ENCODE measurements at regions of chr5 and their contacts with region 1.

Region 1: DNA sequence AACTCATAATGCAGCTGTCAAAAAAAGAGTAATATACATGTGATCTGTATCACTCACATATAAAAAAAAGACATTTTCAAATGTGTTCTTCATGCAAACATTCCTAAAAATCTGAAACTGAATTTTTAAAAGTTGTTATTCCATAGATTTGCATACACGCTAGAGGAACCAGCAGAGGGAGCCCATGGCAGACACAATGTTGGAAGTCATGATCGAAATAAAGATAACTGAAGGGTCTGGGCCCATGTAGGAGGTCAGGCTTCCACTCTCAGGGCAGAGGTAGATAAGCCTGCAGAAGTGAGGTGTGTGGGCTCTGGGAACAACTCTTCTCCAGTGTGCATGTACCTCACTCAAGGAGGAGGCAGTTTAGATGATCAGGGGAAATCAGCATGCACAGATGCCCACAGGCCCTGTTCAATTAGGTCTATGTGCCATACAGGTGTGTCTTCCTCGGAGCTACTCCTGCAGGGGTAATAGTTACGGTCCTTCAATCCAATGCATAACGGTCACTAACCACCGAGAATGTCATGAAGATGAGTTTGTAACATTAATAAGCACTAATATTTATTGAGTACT is 208.6 kb downstream of the EPB41L4A start:
- DNase-seq: peak; percentile 63
- H3K4me3 Mint-ChIP-seq: no peak overlapping the region
- H3K27ac Mint-ChIP-seq: no peak overlapping the region
- H3K4me1 Mint-ChIP-seq: peaks cover 6% of the 10 kb centered on the region
- H3K27me3 Mint-ChIP-seq: no peaks in the 10 kb centered on the region
- CTCF ChIP-seq: peak; percentile 69

Region 2: DNA sequence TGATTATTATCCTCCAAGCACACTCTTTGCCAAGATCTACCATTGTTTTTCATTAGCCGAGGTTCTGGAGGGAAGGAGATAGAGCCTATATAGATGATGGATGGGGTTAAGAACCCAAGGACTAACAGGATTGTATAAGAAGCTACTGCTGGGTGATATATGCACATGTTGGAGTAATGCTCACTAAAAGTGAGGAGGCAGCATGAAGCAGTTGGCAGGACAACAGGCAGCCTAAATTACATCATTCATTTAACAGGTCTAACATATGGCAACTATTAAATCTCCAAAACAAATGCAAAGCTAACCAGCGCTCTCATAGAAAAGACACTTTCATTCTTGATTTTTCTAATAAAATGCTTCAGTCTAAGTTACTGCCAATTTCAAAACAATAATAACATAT is 84.6 kb before region 1 on chr5:
- CTCF ChIA-PET with region 1: no interaction called
- POLR2A ChIA-PET with region 1: no interaction called
- intact Hi-C with region 1: no loop called
- DNase-seq: no peak
- H3K4me3 Mint-ChIP-seq: no peak overlapping the region
- H3K27ac Mint-ChIP-seq: no peak overlapping the region
- H3K4me1 Mint-ChIP-seq: no peaks in the 10 kb centered on the region
- H3K27me3 Mint-ChIP-seq: no peaks in the 10 kb centered on the region
- CTCF ChIP-seq: no peak

Region 3: DNA sequence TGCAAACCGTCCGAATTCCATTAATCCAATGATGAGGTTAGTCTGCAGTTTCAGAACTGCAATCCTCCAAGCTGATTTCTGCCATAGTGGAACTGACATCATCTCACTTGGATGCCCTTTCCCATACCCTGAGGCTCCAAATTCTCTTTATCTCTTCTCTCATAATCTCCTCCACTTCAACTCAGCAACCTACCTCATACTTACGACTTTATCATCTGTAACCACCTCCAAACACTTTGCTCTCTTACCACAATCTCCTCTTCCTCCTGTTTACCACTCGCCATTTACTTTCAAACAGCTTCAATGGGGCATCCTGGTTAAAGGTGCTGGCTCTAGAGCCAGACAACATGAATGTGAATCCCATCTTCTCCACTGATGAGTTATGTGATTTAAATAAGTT is 14.6 kb before region 1 on chr5:
- CTCF ChIA-PET with region 1: interaction called, 12 read pairs
- POLR2A ChIA-PET with region 1: interaction called, 3 read pairs
- intact Hi-C with region 1: no loop called
- DNase-seq: no peak
- H3K4me3 Mint-ChIP-seq: no peak overlapping the region
- H3K27ac Mint-ChIP-seq: no peak overlapping the region
- H3K4me1 Mint-ChIP-seq: no peaks in the 10 kb centered on the region
- H3K27me3 Mint-ChIP-seq: no peaks in the 10 kb centered on the region
- CTCF ChIP-seq: no peak

Region 4: GRCh38 chr5:112529525-112529924 is 319.0 kb after region 1 on chr5:
- CTCF ChIA-PET with region 1: interaction called, 3 read pairs
- POLR2A ChIA-PET with region 1: no interaction called
- intact Hi-C with region 1: loop called (anchors 2 kb)
- DNase-seq: peak; percentile 45
- H3K4me3 Mint-ChIP-seq: no peak overlapping the region
- H3K27ac Mint-ChIP-seq: no peak overlapping the region
- H3K4me1 Mint-ChIP-seq: no peaks in the 10 kb centered on the region
- H3K27me3 Mint-ChIP-seq: no peaks in the 10 kb centered on the region
- CTCF ChIP-seq: peak; percentile 26